GM13976 (cell line): ENCODE measurements at regions of chr7 and their contacts with region 1.

Region 1: DNA sequence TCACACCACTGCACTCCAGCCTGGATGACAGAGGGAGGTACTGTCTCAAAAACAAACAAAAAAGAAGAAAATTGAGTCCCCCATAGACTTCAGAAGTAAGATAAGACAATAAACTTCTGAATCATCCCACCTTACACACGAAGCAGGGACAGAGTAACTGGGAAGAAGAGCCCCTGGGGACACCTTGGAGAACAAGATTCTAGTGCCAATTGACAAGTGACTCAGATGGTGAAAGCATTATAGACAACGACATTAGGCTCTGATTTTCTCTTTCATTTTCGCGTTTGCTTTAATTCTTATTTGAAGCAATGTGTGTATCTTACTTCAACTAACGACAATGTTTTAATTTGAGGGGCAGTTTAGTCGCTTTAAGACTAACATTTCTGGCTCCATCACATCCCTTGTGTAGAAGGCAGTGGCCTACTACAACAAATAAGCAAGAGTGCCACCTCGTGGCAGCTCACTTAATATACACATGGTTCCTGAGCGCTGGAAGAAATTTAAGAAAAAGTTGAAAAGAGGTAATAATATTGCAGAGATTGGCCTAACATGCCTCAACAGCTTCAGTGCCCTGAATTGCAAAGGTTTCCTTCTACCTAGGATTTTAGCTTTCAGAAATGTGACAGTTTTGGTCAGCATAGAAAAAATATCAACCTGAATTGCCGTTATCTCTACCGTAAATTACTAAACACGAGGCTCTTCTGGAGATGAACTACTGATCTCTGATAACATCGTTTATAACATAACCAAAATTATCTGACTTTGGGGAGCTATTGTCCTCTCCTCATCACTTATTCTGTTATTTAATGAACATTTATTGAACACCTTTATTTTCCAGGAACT is 36.7 kb downstream of the ASNS start:
- DNase-seq: peak; percentile 53
- CTCF ChIP-seq: peak; percentile 70

Region 2: GRCh38 chr7:97104719-97105238 is 730.7 kb before region 1 on chr7:
- in situ Hi-C with region 1: loop called (anchors 10 kb)
- DNase-seq: peak; percentile 64
- CTCF ChIP-seq: peak; percentile 70

Region 3: GRCh38 chr7:97275475-97275874 is 560.0 kb before region 1 on chr7:
- in situ Hi-C with region 1: no loop called
- DNase-seq: no peak
- CTCF ChIP-seq: no peak

Region 4: DNA sequence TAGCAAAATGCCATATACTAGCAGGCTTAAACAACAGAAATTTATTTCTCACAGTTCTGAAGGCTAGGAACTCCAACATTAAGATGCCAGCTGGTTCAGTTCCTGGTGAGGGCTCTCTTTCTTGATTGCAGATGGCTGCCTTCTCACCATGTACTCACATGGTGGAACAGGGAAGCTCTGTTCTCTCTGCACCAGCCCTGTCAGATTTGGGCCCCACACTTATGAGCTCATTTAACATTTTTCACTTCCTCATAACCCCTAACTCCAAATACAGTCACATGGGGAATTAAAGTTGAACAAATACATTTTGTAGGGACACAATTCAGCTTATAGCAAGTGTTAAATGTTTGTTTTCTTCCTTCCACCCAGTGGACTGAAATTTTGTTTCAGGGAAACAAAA is 322.2 kb before region 1 on chr7:
- in situ Hi-C with region 1: loop called (anchors 25 kb)
- DNase-seq: no peak
- CTCF ChIP-seq: no peak